ENCODE measurements at regions of chr12 and their contacts with region 1.

Region 1: DNA sequence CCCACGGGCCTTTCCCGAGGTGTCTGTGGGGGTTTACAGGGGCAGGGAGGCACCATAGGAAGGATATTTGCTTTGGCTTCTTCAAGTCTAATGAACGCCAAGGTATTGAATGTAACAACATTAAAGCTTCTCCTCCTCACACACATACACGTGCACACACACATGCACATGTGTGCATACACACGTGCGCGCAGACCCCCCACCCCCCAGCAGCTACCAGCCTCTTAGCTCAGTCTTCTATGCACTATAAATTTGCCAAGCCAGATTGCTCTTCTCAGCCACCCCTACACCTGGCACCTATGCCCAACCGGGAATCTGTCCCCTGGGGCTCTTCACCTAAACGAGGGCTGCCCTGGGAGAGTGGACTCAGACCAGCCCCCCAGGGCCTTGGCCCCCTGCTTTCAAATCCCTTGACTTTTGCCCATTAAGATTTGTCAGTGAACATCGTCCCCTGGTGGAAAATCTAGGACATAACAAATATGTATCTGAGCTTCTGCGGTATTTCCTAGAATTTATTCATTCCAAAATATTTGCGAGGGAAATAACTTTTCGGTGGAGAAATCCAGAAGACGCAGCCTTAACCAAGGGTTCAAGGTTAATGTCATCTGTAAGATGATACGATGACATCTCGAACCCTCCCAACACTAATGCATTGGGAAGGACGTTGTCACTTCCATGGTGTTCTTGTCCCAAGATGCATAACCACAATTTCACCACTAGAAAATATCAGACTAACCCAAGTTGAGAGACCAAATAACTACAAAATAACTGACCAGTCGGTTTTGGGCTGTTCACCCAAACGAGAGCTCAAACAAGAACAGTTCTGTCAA is 330.4 kb downstream of the MED13L start:
- DNase-seq: no peak
- H3K4me3 ChIP-seq: no peak overlapping the region
- H3K27me3 ChIP-seq: no peaks in the 10 kb centered on the region
- CTCF ChIP-seq: peak; percentile 76

Region 2: DNA sequence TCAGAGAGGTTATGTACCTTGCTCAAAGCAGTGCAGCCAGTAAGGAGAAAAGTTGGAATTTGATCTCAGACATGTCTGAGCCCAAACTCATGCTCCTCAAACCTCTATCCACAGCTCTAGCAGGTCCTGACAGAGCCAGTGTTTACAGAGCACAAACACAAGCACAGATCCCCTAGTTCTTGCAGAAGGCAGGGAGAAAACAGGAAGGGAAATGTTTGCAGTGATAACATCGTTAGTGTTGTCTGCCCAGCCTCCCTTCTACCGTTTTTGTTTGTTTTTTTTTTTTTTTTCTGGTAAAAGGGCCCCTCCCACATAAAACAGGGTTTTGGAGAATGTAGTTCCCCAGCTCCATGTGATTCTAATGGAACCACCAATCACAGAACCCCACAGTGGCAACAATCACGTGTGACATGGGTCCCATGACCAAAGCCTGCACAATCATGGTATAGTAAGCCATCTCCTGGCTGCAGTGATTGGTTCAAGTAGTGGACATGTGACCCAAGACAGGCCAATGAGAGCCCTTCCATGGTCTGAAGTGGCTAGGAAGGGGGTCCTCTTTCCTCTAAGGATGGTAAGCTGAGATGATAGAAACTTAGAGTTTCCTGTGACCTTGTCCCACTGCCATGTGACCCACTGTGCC is 183.0 kb before region 1 on chr12:
- CTCF ChIA-PET with region 1: interaction called, 3 read pairs
- POLR2A ChIA-PET with region 1: interaction called, 10 read pairs
- DNase-seq: no peak
- H3K4me3 ChIP-seq: no peak overlapping the region
- H3K27me3 ChIP-seq: no peaks in the 10 kb centered on the region
- CTCF ChIP-seq: no peak